AG04450 (cell line): ENCODE measurements at regions of chr15 and their contacts with region 1.

Region 1: GRCh38 chr15:81163961-81164800 is 30.1 kb downstream of the CFAP161 start:
- DNase-seq: peak; percentile 90
- H3K4me3 ChIP-seq: no peak overlapping the region
- H3K27ac ChIP-seq: peak overlapping the region; percentile 96
- H3K27me3 ChIP-seq: no peaks in the 10 kb centered on the region
- CTCF ChIP-seq: peak; percentile 41

Region 2: DNA sequence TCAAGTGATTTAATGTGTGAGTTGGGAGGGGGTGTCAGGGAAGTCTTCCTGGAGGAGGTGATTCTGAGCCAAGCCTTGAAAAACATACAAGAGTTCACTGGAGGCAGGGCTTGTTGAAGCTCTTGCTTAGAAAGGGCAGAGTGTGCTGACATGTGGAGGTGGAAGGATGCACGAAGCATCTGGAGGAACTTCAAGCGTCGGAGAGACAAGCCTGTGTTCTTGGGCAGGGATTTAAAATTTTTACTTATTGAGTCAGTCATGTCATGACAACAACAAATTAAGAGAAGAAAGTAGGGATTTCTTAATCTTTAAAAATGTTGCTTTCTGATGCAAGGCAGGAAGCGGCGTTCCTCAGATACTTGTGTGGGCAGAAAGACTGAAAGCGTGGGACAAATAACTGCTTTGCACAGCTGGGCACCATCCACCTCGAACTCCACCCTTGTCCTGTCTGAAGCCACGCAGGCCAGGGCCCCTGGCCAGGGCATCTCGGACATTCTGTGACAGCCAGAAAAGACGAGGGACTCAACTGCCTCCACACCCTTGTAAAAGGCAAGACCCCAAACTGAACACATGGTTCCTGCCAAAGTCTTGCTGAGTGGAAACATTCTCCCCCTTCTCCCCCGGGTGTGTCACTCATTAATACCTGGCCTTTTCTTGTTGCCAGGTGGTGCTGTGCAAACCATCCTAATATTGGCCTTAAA is 25.6 kb after region 1 on chr15:
- CTCF ChIA-PET with region 1: no interaction called
- POLR2A ChIA-PET with region 1: interaction called, 14 read pairs
- DNase-seq: peak; percentile 99
- H3K4me3 ChIP-seq: peak overlapping the region; percentile 25; the same call in 1 of the 2 replicates
- H3K27ac ChIP-seq: peak overlapping the region; percentile 100
- H3K27me3 ChIP-seq: no peaks in the 10 kb centered on the region
- CTCF ChIP-seq: no peak

Region 3: GRCh38 chr15:81206018-81206417 is 41.8 kb after region 1 on chr15:
- CTCF ChIA-PET with region 1: no interaction called
- POLR2A ChIA-PET with region 1: no interaction called
- DNase-seq: no peak
- H3K4me3 ChIP-seq: no peak overlapping the region
- H3K27ac ChIP-seq: no peak overlapping the region
- H3K27me3 ChIP-seq: no peaks in the 10 kb centered on the region
- CTCF ChIP-seq: no peak

Region 4: GRCh38 chr15:81419332-81419943 is 255.3 kb after region 1 on chr15:
- CTCF ChIA-PET with region 1: no interaction called
- POLR2A ChIA-PET with region 1: no interaction called
- DNase-seq: peak; percentile 10
- H3K4me3 ChIP-seq: no peak overlapping the region
- H3K27ac ChIP-seq: no peak overlapping the region
- H3K27me3 ChIP-seq: no peaks in the 10 kb centered on the region
- CTCF ChIP-seq: no peak

Region 5: DNA sequence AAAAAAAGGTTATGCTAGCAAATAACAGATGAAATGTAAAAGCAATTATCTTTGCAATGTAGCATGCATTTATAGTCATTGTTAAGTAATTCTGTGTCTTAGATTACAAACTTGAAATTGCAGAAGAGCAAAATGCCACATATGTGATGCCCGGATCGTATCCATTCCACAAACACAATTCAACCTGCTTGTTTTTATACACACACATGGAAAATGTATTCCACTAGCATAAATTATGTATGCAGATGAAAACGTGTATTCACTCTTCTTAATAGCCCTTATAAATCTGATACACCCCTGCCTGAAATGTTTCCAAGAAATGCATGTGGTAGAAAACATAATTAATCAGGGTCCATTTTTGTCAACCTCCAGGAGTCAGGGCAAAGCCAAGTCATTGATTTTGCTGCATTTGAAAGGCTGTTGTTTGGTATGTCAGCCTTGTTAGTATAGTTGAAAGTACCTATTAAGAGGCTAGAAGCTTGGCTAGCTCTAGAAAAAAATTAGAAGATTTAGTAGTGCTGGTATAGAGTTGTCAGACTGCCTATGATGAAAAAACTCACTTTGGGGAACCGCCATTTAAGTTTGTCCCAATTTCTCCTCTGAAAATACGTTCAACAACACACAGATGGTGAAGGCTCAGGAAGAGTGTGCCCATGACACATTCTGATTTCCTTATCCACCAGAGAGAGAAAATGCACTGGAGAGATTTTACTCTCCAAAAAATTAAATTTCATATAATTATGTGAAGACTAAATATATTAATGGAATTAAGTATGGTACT is 279.0 kb after region 1 on chr15:
- CTCF ChIA-PET with region 1: no interaction called
- POLR2A ChIA-PET with region 1: no interaction called
- DNase-seq: no peak
- H3K4me3 ChIP-seq: no peak overlapping the region
- H3K27ac ChIP-seq: no peak overlapping the region
- H3K27me3 ChIP-seq: no peaks in the 10 kb centered on the region
- CTCF ChIP-seq: no peak

Region 6: GRCh38 chr15:81633889-81634288 is 469.7 kb after region 1 on chr15:
- CTCF ChIA-PET with region 1: no interaction called
- POLR2A ChIA-PET with region 1: no interaction called
- DNase-seq: no peak
- H3K4me3 ChIP-seq: no peak overlapping the region
- H3K27ac ChIP-seq: no peak overlapping the region
- H3K27me3 ChIP-seq: no peaks in the 10 kb centered on the region
- CTCF ChIP-seq: no peak